Posterior vena cava (tissue), 2 donors: ENCODE measurements at regions of chr4 and their contacts with region 1.

Region 1: GRCh38 chr4:3352941-3353594 is 60.2 kb downstream of the RGS12 start:
- DNase-seq: no peak

Region 2: GRCh38 chr4:2891294-2891693 is 461.8 kb before region 1 on chr4:
- intact Hi-C with region 1: loop called in 1 of 2 experiments (anchors 5 kb)
- DNase-seq: no peak